Motor neuron (in vitro differentiated cells): ENCODE measurements at regions of chr22 and their contacts with region 1.

Region 1: DNA sequence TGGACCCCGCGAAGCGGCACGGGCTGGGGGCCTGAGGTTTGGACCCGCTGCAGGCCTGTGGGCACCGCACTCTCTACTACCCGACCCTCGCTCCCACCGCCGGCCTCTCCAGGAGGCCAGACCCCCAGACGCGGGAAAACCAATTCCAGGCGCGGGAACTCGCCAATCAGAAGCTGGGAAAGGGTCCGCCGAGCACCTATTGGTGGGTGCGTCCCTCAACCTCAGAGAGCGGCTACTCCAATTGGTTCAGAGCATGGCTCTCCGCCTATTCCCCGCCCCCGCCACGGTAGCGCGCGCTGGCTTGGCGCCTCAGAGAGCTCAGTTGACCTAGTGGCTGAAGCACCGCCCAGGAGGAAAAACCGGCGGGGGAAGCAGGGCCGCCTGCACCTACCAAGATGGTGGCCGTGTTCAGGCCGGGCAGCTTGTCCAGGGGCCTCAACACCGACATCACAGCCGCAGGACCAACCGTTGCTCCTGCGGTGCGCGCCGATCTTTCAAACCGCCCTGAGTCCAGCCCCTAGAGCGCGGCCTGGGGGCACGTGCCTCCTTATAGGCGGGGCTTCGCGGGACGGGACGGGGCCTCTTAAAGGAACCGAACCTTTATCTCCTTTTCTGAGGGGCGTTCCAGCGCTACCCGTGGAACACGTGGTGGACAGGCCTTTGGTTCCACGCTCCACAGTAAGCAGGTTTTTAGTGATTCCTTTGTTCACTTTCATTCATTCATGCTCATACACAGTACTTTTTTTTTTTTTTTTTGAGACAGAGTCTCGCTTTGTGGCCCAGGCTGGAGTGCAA is at the start of gene CENPM:
- ATAC-seq: peak; percentile 89 to 98 (median 93)
- H3K4me3 ChIP-seq: peak within 1 kb of the TSS; percentile 54 to 88 (median 77)
- H3K27ac ChIP-seq: peak within 1 kb of the TSS; percentile 27 to 42
- H3K4me1 ChIP-seq: peaks cover 20 to 22% of the 10 kb centered on the region in 2 donors
- total RNA-seq, gene CENPM: 1.4 to 28.1 (median 4.4) TPM

Region 2: DNA sequence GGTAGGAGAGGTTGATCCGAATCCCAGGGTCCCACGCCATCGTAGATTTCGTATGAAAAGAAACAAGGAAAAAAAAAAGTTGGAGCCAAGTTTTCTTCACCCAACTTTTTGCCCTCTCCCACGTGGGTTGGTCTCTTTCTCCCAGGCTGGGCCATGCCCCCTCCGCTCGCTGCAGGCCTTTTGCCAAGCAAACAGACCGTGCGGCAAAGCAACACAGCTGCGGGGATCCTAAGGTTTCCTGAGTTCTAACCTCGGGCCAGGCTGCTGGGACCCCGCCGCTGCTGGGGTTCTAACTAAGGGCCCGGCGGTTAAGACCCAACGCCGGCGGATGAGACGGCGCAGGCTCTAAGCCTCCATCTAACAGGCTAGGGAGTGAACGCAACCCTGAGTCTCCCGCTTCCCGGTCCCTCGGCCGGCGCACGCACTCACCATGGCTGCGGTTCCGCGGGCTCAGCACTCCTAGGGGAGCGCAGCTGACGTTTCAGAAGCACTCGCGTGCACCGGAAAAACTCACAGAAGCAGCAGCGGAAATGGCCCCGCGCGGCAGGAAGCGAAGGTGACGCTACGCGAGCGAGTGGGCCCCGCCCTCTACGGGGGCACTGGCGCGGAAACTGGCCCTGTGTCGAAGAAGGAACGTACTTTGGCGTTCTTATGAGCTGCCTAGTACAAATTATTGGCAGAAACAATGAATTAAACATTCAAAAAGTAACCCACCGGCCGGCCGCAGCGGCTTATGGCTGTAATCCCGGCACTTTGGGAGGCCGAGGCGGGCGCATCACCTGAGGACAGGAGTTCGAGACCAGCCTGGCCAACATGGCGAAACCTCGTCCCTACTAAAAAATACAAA is 258.2 kb before region 1 on chr22 and contains the start of gene SNU13:
- in situ Hi-C with region 1: loop called in 7 of 9 experiments (anchors 10 to 25 kb)
- ATAC-seq: peak; percentile 85 to 97 (median 95)
- H3K4me3 ChIP-seq: peak within 1 kb of the TSS; percentile 67 to 79 (median 74)
- H3K27ac ChIP-seq: peak within 1 kb of the TSS; percentile 63 to 92
- H3K4me1 ChIP-seq: peaks cover 5 to 8% of the 10 kb centered on the region in 2 donors
- total RNA-seq, gene SNU13: 119 to 227 (median 162) TPM

Region 3: GRCh38 chr22:41697126-41697775 is 249.6 kb before region 1 on chr22:
- in situ Hi-C with region 1: loop called in 8 of 9 experiments (anchors 10 to 25 kb)
- ATAC-seq: peak; percentile 89 to 97 (median 92)
- H3K4me3 ChIP-seq: no peak overlapping the region
- H3K27ac ChIP-seq: no peak overlapping the region
- H3K4me1 ChIP-seq: peaks cover 4 to 8% of the 10 kb centered on the region in 2 donors

Region 4: DNA sequence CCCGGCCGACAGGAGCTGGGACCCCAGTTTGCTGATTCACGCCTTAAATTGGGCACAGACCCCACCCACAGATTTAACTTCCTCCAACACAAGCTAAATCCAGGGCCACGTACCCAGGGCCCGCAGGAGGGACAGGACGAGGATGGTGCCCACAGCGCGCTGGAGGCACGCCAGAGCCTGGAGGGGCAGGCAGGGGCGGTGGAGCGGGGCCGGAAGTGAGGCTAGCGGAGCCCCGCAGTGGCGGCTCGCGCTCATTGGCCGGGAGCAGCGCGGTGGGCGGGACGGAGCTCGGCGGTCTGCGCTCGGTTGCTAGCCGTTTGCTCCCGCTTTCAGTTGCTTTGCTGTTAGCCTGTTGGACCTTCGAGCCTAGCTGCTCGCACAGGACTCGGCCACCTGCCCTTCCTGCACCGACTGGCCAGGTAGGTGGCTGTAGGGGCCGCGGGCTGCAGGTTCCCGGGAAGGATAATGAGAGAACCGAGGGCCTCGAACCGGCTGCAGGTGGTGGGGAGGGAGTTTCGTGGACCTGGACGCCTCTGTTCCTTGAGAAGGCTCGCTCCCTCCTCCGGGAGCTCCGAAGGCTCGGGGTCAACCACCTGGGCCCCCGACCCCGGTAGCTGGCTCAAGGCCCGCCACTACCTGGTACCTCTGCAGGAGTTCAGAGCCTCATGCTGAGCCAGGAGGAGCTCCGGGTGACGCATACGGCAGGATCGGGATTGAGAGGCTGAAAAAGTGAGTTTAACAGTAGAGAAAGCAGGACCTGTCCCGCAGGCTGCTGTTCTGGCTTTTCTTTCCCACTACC is 146.3 kb before region 1 on chr22 and contains the start of gene CCDC134:
- in situ Hi-C with region 1: loop called in 1 of 9 experiments (anchors 25 kb)
- ATAC-seq: peak; percentile 96 to 99 (median 98)
- H3K4me3 ChIP-seq: peak within 1 kb of the TSS; percentile 61 to 93 (median 68)
- H3K27ac ChIP-seq: peak within 1 kb of the TSS; percentile 53 to 73
- H3K4me1 ChIP-seq: peaks cover 7 to 17% of the 10 kb centered on the region in 2 donors
- total RNA-seq, gene CCDC134: 7.0 to 19.0 (median 10.2) TPM

Region 5: DNA sequence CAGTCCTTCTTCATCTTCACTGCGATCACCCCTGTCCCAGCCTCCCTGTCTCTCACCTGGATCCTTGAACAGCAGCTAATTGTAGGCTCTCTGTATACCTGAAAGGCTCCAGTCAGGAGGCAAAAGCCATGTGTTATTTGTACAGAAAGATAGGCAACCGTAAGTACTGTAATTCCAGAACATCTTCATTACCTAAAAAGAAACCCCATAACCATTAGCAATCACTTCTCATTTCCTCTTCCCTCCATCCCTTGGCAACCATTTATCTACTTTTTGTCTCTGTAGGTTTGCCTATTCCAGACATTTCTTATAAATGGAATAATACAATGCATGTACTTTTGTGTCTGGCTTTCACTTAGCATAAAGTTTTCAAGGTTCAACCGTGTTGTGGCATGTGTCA is 105.9 kb after region 1 on chr22:
- in situ Hi-C with region 1: no loop called
- ATAC-seq: no peak
- H3K4me3 ChIP-seq: no peak overlapping the region
- H3K27ac ChIP-seq: no peak overlapping the region
- H3K4me1 ChIP-seq: no peaks in the 10 kb centered on the region

Region 6: DNA sequence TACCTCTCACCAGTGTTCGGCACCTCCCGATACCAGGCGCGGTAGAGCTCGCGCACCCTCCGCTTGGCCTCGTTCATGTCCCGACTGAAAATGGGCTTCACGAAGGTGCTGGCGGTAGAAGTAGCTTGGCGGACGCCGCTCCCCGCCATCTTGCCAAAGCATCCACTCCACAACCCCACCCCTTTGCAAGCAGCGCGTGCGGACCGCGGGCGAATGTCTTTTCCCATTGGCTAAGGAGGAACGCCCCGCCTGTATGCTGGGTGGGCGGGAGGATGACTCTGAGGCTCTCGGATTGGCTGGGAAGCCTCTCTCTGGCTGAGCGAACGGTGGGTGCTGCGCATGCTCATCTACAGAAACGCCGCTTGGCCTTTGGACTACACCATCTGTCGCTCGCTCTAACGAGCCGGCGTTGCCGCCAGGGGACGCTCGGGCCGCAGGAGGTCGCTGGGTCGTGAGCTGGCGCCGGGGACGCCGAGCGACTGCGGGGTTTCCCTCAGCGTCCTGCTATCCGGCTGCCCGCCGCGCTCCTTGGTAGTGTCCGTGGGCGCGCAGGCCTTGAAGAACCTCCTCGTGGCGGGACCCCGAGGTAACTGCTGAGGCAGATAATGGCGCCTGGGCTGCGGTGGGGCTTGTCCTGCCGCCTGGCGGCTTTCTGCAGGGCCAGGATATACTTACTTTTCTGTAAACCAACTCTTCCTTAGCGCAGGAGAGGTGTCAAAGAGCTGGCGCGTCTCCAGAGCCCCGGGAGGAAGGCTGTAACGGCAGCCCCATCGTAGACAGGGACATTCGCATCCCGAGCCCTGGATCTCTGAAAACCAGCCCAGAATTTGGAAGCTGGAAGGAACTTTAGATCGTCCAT is 144.0 kb after region 1 on chr22 and contains the start of gene NDUFA6:
- in situ Hi-C with region 1: no loop called
- ATAC-seq: peak; percentile 93 to 98 (median 97)
- H3K4me3 ChIP-seq: peak within 1 kb of the TSS; percentile 53 to 90 (median 71)
- H3K27ac ChIP-seq: peak within 1 kb of the TSS; percentile 87 to 95
- H3K4me1 ChIP-seq: peaks cover 3% of the 10 kb centered on the region in 2 donors
- total RNA-seq, gene NDUFA6: 86.9 to 151 (median 105) TPM

Region 7: GRCh38 chr22:42635531-42635930 is 688.7 kb after region 1 on chr22:
- in situ Hi-C with region 1: no loop called
- ATAC-seq: peak in 3 of 8 experiments; percentile 60 to 98 (median 98)
- H3K4me3 ChIP-seq: no peak overlapping the region
- H3K27ac ChIP-seq: no peak overlapping the region
- H3K4me1 ChIP-seq: no peaks in the 10 kb centered on the region